Activated CD4-positive, alpha-beta memory T cell treated with anti-CD3 and anti-CD28 coated beads for 36 hours (primary cell): ENCODE measurements at regions of chr16 and their contacts with region 1.

Region 1: DNA sequence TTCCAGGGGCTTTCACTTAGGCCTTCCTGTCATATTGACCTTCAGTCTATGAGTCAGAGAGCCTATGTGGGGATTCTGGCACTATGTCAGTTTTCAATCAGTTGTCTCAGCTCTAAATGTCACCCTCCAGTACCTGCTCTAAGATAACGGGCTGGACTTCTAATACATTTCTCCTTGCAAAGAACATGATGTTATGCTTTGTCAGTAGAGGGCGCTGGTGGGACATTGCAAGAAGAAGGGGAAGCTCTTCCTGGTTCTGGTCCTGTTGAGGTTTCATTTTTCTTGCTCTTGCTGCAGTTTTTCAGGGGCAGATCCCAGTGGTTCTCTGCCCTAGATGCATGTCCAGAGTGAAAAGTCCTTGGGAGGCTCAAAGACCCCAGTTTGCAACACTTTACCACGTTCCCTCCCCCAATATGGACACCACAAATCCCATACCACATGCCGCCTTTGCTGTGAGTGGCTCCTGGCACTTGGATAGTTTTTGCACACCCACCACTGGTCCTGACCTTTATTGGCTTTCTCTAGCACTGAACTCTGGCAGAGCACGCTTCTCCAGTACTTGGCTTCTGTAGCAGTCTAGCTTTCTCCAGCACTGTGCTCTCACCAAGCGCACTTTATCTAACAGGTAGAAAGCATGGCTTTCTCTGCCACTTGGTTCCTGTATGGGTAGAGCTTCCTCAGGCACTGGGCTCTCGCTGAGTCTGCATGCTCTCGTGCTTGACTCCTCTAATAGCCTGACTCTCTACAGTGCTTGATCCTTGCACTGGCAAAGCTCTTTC is 49.0 kb downstream of the BCL7C start:
- DNase-seq: peak; percentile 80
- H3K4me3 Mint-ChIP-seq: no peak overlapping the region
- H3K27ac Mint-ChIP-seq: no peak overlapping the region
- H3K4me1 Mint-ChIP-seq: peaks cover 9% of the 10 kb centered on the region
- H3K27me3 Mint-ChIP-seq: no peaks in the 10 kb centered on the region

Region 2: DNA sequence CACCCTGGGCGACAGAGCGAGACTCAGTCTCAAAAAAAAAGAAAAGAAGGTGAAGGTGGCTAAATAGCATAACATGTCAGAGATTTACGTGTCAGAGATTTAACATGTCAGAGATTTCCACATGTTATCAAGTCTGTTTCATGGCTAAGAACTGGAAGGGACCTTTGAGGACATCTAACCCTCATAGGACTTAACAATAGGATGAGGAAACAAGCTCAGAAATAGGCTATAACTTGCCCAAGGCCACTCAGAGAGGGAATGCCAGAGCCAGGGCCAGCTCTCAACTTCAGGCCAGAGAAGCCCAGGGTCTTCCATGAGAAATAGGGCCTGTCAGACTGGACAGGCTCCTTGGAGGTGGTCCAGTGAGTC is 31.1 kb before region 1 on chr16:
- CTCF ChIA-PET with region 1: interaction called, 35 read pairs
- POLR2A ChIA-PET with region 1: no interaction called
- intact Hi-C with region 1: no loop called
- DNase-seq: no peak
- H3K4me3 Mint-ChIP-seq: peak overlapping the region; percentile 84
- H3K27ac Mint-ChIP-seq: peak overlapping the region; percentile 72
- H3K4me1 Mint-ChIP-seq: peaks cover 11% of the 10 kb centered on the region
- H3K27me3 Mint-ChIP-seq: no peaks in the 10 kb centered on the region

Region 3: GRCh38 chr16:30874821-30875717 is 30.2 kb after region 1 on chr16:
- CTCF ChIA-PET with region 1: interaction called, 28 read pairs
- POLR2A ChIA-PET with region 1: interaction called, 13 read pairs
- intact Hi-C with region 1: loop called (anchors 1 kb)
- DNase-seq: peak; percentile 93
- H3K4me3 Mint-ChIP-seq: peak overlapping the region; percentile 96
- H3K27ac Mint-ChIP-seq: peak overlapping the region; percentile 90
- H3K4me1 Mint-ChIP-seq: peaks cover 34% of the 10 kb centered on the region
- H3K27me3 Mint-ChIP-seq: no peaks in the 10 kb centered on the region

Region 4: GRCh38 chr16:30902029-30902972 is 57.4 kb after region 1 on chr16:
- CTCF ChIA-PET with region 1: interaction called, 164 read pairs
- POLR2A ChIA-PET with region 1: interaction called, 9 read pairs
- intact Hi-C with region 1: loop called (anchors 2 kb)
- DNase-seq: peak; percentile 69
- H3K4me3 Mint-ChIP-seq: peak overlapping the region; percentile 93
- H3K27ac Mint-ChIP-seq: peak overlapping the region; percentile 95
- H3K4me1 Mint-ChIP-seq: peaks cover 27% of the 10 kb centered on the region
- H3K27me3 Mint-ChIP-seq: no peaks in the 10 kb centered on the region

Region 5: GRCh38 chr16:30934827-30935557 is 90.1 kb after region 1 on chr16:
- CTCF ChIA-PET with region 1: interaction called, 71 read pairs
- POLR2A ChIA-PET with region 1: interaction called, 3 read pairs
- intact Hi-C with region 1: no loop called
- DNase-seq: peak; percentile 74
- H3K4me3 Mint-ChIP-seq: no peak overlapping the region
- H3K27ac Mint-ChIP-seq: peak overlapping the region; percentile 35
- H3K4me1 Mint-ChIP-seq: peaks cover 11% of the 10 kb centered on the region
- H3K27me3 Mint-ChIP-seq: no peaks in the 10 kb centered on the region